Adrenal gland (tissue), 19 donors: ENCODE measurements at regions of chr13 and their contacts with region 1.

Region 1: GRCh38 chr13:45047394-45048310 is 58.3 kb downstream of the GPALPP1 start:
- DNase-seq: peak; percentile 68 to 92 (median 82)
- H3K4me3 ChIP-seq: peak overlapping the region in 3 of 4 donors; percentile 7 to 55 (median 43)
- H3K27ac ChIP-seq: peak overlapping the region in 2 of 5 donors; percentile 5 to 54
- H3K4me1 ChIP-seq: peaks cover 4 to 5% of the 10 kb centered on the region in 2 donors
- H3K27me3 ChIP-seq: no peaks in the 10 kb centered on the region
- CTCF ChIP-seq: peak; percentile 77 to 97 (median 94)
- POLR2A ChIP-seq: no peak

Region 2: GRCh38 chr13:45242070-45242469 is 194.4 kb after region 1 on chr13:
- intact Hi-C with region 1: no loop called
- DNase-seq: peak in 3 of 7 donors; percentile 31 to 49 (median 42)
- H3K4me3 ChIP-seq: no peak overlapping the region
- H3K27ac ChIP-seq: peak overlapping the region in 2 of 5 donors; percentile 23 to 41
- H3K4me1 ChIP-seq: peaks cover 5 to 20% of the 10 kb centered on the region in 2 donors
- H3K27me3 ChIP-seq: no peaks in the 10 kb centered on the region
- CTCF ChIP-seq: no peak
- POLR2A ChIP-seq: no peak

Region 3: GRCh38 chr13:45280751-45281634 is 233.3 kb after region 1 on chr13:
- intact Hi-C with region 1: loop called in 1 of 2 experiments (anchors 5 kb)
- DNase-seq: peak; percentile 65 to 89 (median 81)
- H3K4me3 ChIP-seq: no peak overlapping the region
- H3K27ac ChIP-seq: no peak overlapping the region
- H3K4me1 ChIP-seq: peaks cover 0 to 4% of the 10 kb centered on the region in 2 donors
- H3K27me3 ChIP-seq: no peaks in the 10 kb centered on the region
- CTCF ChIP-seq: peak; percentile 46 to 81 (median 77)
- POLR2A ChIP-seq: no peak

Region 4: DNA sequence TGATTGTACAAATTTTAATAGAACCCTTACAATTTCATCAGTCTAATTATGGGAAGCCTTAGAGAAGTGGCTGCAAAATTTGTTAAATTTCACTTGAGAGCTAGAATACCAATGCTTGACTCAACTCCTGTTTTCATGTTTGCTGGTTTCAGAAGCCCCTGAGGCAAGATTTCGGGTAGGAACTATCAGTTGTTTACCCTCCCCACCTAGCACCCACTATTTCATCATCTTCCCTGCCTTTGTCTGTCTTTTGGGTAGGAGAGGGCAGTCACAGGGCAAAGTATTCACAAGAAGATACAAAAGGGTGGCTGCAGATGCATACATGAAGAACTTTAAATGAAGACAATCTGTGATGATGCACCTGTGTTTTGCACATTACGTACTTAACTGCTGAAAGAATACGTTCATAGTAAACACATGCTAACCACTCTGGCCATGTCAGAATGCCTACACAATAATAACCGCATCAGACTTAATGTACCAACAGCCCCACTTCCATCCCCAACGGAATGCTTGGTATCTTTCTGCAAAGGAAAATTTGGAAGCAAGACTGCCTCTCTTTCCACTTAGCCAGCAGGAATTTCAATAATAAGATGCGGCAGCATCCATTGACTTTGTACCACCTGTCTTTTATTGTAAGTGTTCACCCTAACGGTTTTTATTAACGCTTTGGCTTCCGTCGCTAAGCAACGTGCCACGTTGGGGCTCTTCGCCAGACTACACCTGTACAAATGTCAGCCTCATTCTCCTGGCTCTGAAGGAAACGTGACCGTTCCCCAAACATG is 262.9 kb after region 1 on chr13:
- intact Hi-C with region 1: loop called (anchors 2 to 10 kb)
- DNase-seq: no peak
- H3K4me3 ChIP-seq: no peak overlapping the region
- H3K27ac ChIP-seq: no peak overlapping the region
- H3K4me1 ChIP-seq: peaks cover 0 to 13% of the 10 kb centered on the region in 2 donors
- H3K27me3 ChIP-seq: no peaks in the 10 kb centered on the region
- CTCF ChIP-seq: no peak
- POLR2A ChIP-seq: no peak